Activated CD4-positive, alpha-beta T cell treated with anti-CD3 and anti-CD28 coated beads, Interleukin-2, amount 10 ng/mL, durations not matched to agents 24 days and 14 days (primary cell): ENCODE measurements at regions of chr2 and their contacts with region 1.

Region 1: GRCh38 chr2:23436346-23437098 is 51.5 kb downstream of the KLHL29 start:
- DNase-seq: peak; percentile 75
- H3K4me3 Mint-ChIP-seq: peak overlapping the region; percentile 30
- H3K27ac Mint-ChIP-seq: peak overlapping the region; percentile 12
- H3K4me1 Mint-ChIP-seq: peaks cover 13% of the 10 kb centered on the region
- H3K27me3 Mint-ChIP-seq: peaks cover 27% of the 10 kb centered on the region

Region 2: GRCh38 chr2:23384551-23385349 is 51.8 kb before region 1 on chr2 and contains the start of gene KLHL29:
- intact Hi-C with region 1: loop called (anchors 5 kb)
- DNase-seq: peak; percentile 93
- H3K4me3 Mint-ChIP-seq: peak within 1 kb of the TSS; percentile 85
- H3K27ac Mint-ChIP-seq: peak within 1 kb of the TSS; percentile 79
- H3K4me1 Mint-ChIP-seq: peaks cover 26% of the 10 kb centered on the region
- H3K27me3 Mint-ChIP-seq: peaks cover 68% of the 10 kb centered on the region
- total RNA-seq, gene KLHL29: 3.7 and 3.8 TPM in 2 replicates

Region 3: GRCh38 chr2:23452853-23453420 is 16.4 kb after region 1 on chr2:
- intact Hi-C with region 1: loop called (anchors 2 kb)
- DNase-seq: peak; percentile 78
- H3K4me3 Mint-ChIP-seq: peak overlapping the region; percentile 58
- H3K27ac Mint-ChIP-seq: peak overlapping the region; percentile 18
- H3K4me1 Mint-ChIP-seq: peaks cover 30% of the 10 kb centered on the region
- H3K27me3 Mint-ChIP-seq: peaks cover 7% of the 10 kb centered on the region